ENCODE measurements at regions of chr1 and their contacts with region 1.

Region 1: GRCh38 chr1:235075188-235075926 is 53.3 kb downstream of the TOMM20 start:
- DNase-seq: peak; percentile 89
- ATAC-seq: peak; percentile 57
- H3K4me3 ChIP-seq: peak overlapping the region; percentile 56 to 82 (median 58)
- H3K27ac ChIP-seq: peak overlapping the region; percentile 99
- H3K4me1 ChIP-seq: peaks cover 91% of the 10 kb centered on the region
- H3K27me3 ChIP-seq: no peaks in the 10 kb centered on the region; a peak in 1 of 5 replicates
- CTCF ChIP-seq: no peak
- EP300 ChIP-seq: peak in 1 of 2 experiments; percentile 59; a peak in 2 of 4 replicates
- POLR2A ChIP-seq: peak in 1 of 2 experiments; percentile 80; a peak in 2 of 4 replicates
- RAD21 ChIP-seq: no peak

Region 2: DNA sequence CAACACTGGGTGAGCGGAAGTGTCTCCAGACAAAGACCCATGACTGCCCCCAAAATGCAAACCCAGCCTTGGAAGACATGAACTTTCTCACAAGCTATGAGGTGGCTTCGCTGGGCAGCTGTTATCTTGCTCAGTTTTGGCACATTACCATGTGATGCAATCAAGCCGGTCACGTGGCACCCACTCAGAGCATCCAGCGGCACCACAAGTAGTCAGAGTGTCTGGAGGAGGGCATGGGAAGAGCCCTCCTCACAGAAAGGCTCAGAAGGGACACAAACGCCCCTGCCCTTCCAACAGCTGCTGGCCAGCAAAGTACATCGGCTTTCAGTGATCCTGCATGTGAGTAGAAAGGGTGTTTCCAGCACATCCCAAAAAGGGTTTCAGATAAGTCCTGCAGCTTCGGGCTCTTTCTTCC is 319.9 kb before region 1 on chr1:
- CTCF ChIA-PET with region 1: no interaction called
- POLR2A ChIA-PET with region 1: interaction called, 3 read pairs
- in situ Hi-C with region 1: no loop called
- intact Hi-C with region 1: loop called (anchors 10 kb)
- DNase-seq: no peak
- ATAC-seq: no peak
- H3K4me3 ChIP-seq: no peak overlapping the region
- H3K27ac ChIP-seq: no peak overlapping the region
- H3K4me1 ChIP-seq: peaks cover 55% of the 10 kb centered on the region
- H3K27me3 ChIP-seq: no peaks in the 10 kb centered on the region
- CTCF ChIP-seq: no peak
- EP300 ChIP-seq: no peak
- POLR2A ChIP-seq: no peak
- RAD21 ChIP-seq: no peak

Region 3: GRCh38 chr1:234963180-234963903 is 112.0 kb before region 1 on chr1:
- CTCF ChIA-PET with region 1: no interaction called
- POLR2A ChIA-PET with region 1: interaction called, 100 read pairs
- in situ Hi-C with region 1: no loop called
- intact Hi-C with region 1: no loop called
- DNase-seq: peak; percentile 99
- ATAC-seq: peak; percentile 70
- H3K4me3 ChIP-seq: peak overlapping the region in 2 of 3 experiments; percentile 33 to 55; a peak in 2 of 6 replicates
- H3K27ac ChIP-seq: peak overlapping the region; percentile 100
- H3K4me1 ChIP-seq: peaks cover 78% of the 10 kb centered on the region
- H3K27me3 ChIP-seq: no peaks in the 10 kb centered on the region
- CTCF ChIP-seq: no peak
- EP300 ChIP-seq: peak in 1 of 2 experiments; percentile 98; a peak in 2 of 4 replicates
- POLR2A ChIP-seq: peak; percentile 70 to 80
- RAD21 ChIP-seq: peak; percentile 26; the same call in 1 of the 2 replicates

Region 4: GRCh38 chr1:234987415-234988154 is 87.8 kb before region 1 on chr1:
- CTCF ChIA-PET with region 1: no interaction called
- POLR2A ChIA-PET with region 1: interaction called, 40 read pairs
- in situ Hi-C with region 1: no loop called
- intact Hi-C with region 1: no loop called
- DNase-seq: peak; percentile 95
- ATAC-seq: peak; percentile 97
- H3K4me3 ChIP-seq: peak overlapping the region; percentile 13 to 53 (median 24); a peak in 4 of 6 replicates
- H3K27ac ChIP-seq: peak overlapping the region; percentile 95
- H3K4me1 ChIP-seq: peaks cover 93% of the 10 kb centered on the region
- H3K27me3 ChIP-seq: no peaks in the 10 kb centered on the region
- CTCF ChIP-seq: 0 out of 2 replicates have a peak, but pooled peaks have one; percentile 9
- EP300 ChIP-seq: peak; percentile 62 to 68; a peak in 2 of 4 replicates
- POLR2A ChIP-seq: peak; percentile 55 to 80; a peak in 3 of 4 replicates
- RAD21 ChIP-seq: 0 out of 2 replicates have a peak, but pooled peaks have one; percentile 19

Region 5: DNA sequence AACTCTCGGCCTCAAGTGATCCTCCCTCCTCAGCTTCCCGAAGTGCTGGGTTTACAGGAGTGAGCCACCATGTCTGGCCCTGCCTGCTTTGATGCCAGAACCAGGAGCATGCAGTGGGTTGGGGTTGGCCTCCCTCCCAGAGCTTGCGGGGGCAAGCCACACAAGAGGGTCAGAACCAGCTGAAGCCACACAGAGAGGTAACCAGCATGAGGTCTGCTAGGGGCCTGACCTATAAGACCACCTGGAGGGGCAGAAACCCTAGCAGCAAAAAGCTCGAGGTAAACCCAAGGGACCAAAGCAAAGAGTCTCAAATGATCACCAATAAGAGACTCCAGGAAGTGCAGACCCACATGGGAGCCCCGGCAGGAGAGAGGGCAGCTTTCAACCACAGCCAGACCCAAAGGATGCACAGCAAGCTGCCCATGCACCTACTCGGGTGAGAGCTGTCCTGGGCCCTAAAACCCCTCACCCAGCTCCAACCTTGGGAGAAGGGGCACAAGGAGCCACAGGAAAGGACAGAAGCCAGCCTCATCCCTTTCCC is 28.0 kb before region 1 on chr1:
- CTCF ChIA-PET with region 1: no interaction called
- POLR2A ChIA-PET with region 1: interaction called, 13 read pairs
- in situ Hi-C with region 1: no loop called
- intact Hi-C with region 1: no loop called
- DNase-seq: no peak
- ATAC-seq: no peak
- H3K4me3 ChIP-seq: no peak overlapping the region
- H3K27ac ChIP-seq: no peak overlapping the region
- H3K4me1 ChIP-seq: peaks cover 27% of the 10 kb centered on the region
- H3K27me3 ChIP-seq: no peaks in the 10 kb centered on the region
- CTCF ChIP-seq: no peak
- EP300 ChIP-seq: no peak
- POLR2A ChIP-seq: no peak
- RAD21 ChIP-seq: no peak

Region 6: DNA sequence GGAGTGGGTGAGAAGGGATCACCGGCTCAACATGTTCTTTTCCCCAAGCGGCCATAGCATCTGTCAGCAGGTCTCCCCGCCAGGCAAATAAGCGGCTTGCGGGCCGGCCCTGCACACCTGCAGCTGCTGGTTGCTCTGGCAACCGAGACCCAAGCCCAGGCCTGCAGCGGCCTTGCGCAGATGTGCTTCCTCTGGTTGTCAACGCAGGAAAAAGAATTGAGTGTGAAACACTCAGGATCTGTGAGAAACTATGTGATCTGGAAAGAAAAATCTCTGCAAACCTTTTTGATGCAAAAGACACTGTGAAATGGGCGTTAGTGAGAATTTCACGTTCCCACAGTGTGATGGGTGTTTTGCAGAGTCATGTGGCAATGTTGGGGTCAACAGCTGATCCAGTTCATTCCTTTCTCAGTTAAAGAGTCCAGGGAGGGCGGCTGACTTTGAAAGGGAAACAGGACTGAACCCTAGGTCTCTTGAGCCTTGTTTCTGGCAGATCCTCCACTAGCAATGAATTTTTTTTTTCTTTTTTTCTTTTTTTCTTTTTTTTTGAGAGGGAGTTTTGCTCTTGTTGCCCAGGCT is 24.9 kb after region 1 on chr1:
- CTCF ChIA-PET with region 1: no interaction called
- POLR2A ChIA-PET with region 1: no interaction called
- in situ Hi-C with region 1: no loop called
- intact Hi-C with region 1: no loop called
- DNase-seq: peak; percentile 52
- ATAC-seq: peak; percentile 48
- H3K4me3 ChIP-seq: no peak overlapping the region
- H3K27ac ChIP-seq: peak overlapping the region; percentile 13
- H3K4me1 ChIP-seq: peaks cover 63% of the 10 kb centered on the region
- H3K27me3 ChIP-seq: no peaks in the 10 kb centered on the region
- CTCF ChIP-seq: no peak
- EP300 ChIP-seq: 0 out of 4 replicates have a peak, but pooled peaks of 1 of the 2 experiments have one; percentile 26
- POLR2A ChIP-seq: no peak
- RAD21 ChIP-seq: no peak

Measured in HepG2 (cell line).